Lower leg skin (tissue), 4 donors: ENCODE measurements at regions of chr12 and their contacts with region 1.

Region 1: DNA sequence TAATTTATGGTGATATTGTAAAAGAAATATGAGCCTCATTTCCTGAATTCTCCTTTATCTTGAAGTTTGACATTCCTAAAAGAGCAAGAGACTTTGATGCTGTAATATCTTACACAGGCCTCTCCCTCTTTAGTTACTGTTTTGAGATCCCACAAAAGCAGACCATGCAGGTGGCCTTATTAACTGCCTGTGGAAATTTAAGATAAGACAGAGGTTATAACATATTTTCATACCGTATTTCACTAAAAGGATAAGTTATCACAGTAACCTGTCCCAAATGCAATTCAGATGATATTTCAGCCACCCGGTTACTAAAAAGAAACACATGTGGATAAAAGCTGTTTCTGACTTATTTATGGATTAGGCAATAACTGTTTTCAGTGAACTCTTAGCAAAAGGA is 150.1 kb downstream of the NAV3 start:
- DNase-seq: no peak
- H3K4me3 ChIP-seq: no peak overlapping the region
- CTCF ChIP-seq: no peak
- POLR2A ChIP-seq: no peak

Region 2: GRCh38 chr12:77578466-77579220 is 402.1 kb before region 1 on chr12:
- intact Hi-C with region 1: no loop called
- DNase-seq: no peak
- H3K4me3 ChIP-seq: no peak overlapping the region
- CTCF ChIP-seq: no peak
- POLR2A ChIP-seq: no peak

Region 3: DNA sequence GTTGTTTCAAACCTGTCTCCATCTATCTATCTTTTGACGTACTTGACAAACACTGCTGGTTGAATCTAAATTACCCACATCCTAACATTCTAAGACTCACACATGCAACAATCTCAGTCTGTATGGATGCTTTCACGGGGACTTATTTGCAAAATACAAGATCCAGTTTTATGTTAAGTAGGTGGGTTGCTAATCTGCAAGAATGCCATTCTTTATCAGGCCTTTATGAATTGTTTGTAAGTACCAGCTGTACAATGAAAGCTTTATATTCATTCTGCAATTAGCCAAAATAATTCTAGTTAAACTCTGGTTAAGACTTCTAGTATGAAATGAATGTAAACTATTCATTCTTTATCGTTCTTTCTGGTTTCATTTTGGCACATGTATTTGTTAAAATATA is 15.0 kb before region 1 on chr12:
- intact Hi-C with region 1: loop called (anchors 1 kb)
- DNase-seq: no peak
- H3K4me3 ChIP-seq: no peak overlapping the region
- CTCF ChIP-seq: no peak
- POLR2A ChIP-seq: no peak